ENCODE measurements at regions of chr21 and their contacts with region 1.

Region 1: DNA sequence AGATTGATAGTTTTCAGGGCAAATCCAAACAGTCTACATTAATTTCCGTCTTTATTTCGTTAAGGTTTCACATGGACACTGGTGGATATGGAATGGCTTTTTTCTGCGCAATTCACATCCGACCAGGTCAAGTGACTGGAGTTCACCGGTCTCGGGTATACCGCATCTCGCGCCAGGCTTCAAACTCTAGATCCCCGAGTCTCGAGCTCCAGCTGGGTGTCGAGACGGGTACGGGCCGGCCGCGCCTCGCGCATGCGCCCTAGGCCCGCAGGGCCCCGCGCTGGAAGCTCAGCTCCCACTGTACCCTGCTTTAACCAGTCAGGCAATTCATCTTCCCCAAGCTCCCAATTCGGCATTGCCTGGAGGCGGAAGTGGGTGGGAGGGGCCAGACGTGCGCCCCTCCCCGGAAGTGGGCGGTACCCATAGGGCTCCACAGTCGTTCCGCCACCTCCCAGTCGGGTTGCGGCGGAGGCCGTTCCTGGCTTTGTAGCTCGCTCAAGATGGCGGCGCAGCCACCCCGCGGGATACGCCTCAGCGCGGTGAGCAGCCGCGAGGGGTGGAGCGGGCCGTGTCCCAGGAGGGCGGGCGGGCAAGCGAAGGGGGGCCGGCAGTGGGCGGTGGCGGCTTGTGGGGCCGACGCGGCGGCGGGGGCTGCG is at the start of gene MORC3:
- DNase-seq: peak; percentile 97 to 99
- ATAC-seq: peak; percentile 95 to 97 (median 96)
- H3K4me3 ChIP-seq: peak within 1 kb of the TSS; percentile 94
- H3K27ac ChIP-seq: peak within 1 kb of the TSS; percentile 99
- H3K4me1 ChIP-seq: peaks cover 31% of the 10 kb centered on the region
- H3K27me3 ChIP-seq: no peaks in the 10 kb centered on the region
- CTCF ChIP-seq: no peak
- total RNA-seq, gene MORC3: 18.9 to 29.6 (median 26.3) TPM

Region 2: GRCh38 chr21:36156339-36156814 is 163.5 kb before region 1 on chr21:
- intact Hi-C with region 1: loop called in 1 of 2 experiments (anchors 2 kb)
- DNase-seq: peak; percentile 99 to 100
- ATAC-seq: peak; percentile 92 to 96 (median 94)
- H3K4me3 ChIP-seq: peak overlapping the region; percentile 92
- H3K27ac ChIP-seq: peak overlapping the region; percentile 79
- H3K4me1 ChIP-seq: peaks cover 15% of the 10 kb centered on the region
- H3K27me3 ChIP-seq: no peaks in the 10 kb centered on the region
- CTCF ChIP-seq: no peak

Region 3: GRCh38 chr21:36384885-36385232 is 65.0 kb after region 1 on chr21:
- intact Hi-C with region 1: loop called in 1 of 2 experiments (anchors 5 kb)
- DNase-seq: no peak
- ATAC-seq: peak; percentile 0 to 6 (median 4)
- H3K4me3 ChIP-seq: peak overlapping the region; percentile 79
- H3K27ac ChIP-seq: peak overlapping the region; percentile 80
- H3K4me1 ChIP-seq: peaks cover 27% of the 10 kb centered on the region
- H3K27me3 ChIP-seq: no peaks in the 10 kb centered on the region
- CTCF ChIP-seq: no peak

Measured in psoas muscle (tissue), 8 donors.